ENCODE measurements at regions of chr15 and their contacts with region 1.

Region 1: GRCh38 chr15:89760303-89761008 is 9.4 kb upstream of the MESP1 start:
- DNase-seq: peak; percentile 95
- H3K4me3 Mint-ChIP-seq: peak overlapping the region; percentile 49
- H3K27ac Mint-ChIP-seq: peak overlapping the region; percentile 60
- H3K4me1 Mint-ChIP-seq: peaks cover 38% of the 10 kb centered on the region
- H3K27me3 Mint-ChIP-seq: no peaks in the 10 kb centered on the region
- CTCF ChIP-seq: peak; percentile 95

Region 2: GRCh38 chr15:89845305-89845893 is 84.9 kb after region 1 on chr15:
- CTCF ChIA-PET with region 1: interaction called, 11 read pairs
- intact Hi-C with region 1: loop called (anchors 2 kb)
- DNase-seq: peak; percentile 37
- H3K4me3 Mint-ChIP-seq: peak overlapping the region; percentile 8
- H3K27ac Mint-ChIP-seq: peak overlapping the region; percentile 77
- H3K4me1 Mint-ChIP-seq: peaks cover 46% of the 10 kb centered on the region
- H3K27me3 Mint-ChIP-seq: no peaks in the 10 kb centered on the region
- CTCF ChIP-seq: no peak

Region 3: DNA sequence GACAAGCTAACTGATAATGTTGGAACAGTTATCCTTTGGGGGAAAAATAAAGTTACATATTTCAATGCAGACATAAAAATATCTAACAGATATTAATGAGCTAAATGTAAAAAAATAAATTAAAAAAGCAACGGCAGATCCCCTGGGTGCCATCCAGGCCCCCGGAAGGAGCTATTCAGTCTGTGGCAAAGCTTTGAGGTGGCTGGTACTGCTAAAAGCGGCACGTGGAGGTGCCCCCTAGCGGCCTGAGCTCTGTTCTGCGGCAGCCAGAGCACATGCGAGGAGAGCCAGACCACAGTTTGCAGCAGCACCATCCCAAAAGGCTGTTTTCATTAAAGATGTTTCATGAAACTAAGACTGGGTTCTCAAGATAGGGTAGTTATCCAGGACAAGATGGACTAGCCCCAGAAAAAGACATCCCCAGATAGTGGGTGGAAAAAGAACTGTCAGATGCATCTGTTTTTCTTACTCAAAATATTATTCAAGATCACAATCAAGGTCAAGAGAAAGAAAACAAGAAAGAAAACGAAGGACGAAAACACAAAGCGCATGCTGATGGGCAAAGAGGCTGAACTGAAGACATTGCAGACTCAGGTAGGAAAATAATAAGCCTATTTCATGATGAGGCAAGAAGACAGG is 114.6 kb after region 1 on chr15:
- CTCF ChIA-PET with region 1: interaction called, 166 read pairs
- intact Hi-C with region 1: loop called (anchors 1 kb)
- DNase-seq: peak; percentile 88
- H3K4me3 Mint-ChIP-seq: no peak overlapping the region
- H3K27ac Mint-ChIP-seq: no peak overlapping the region
- H3K4me1 Mint-ChIP-seq: no peaks in the 10 kb centered on the region
- H3K27me3 Mint-ChIP-seq: no peaks in the 10 kb centered on the region
- CTCF ChIP-seq: peak; percentile 88

Region 4: DNA sequence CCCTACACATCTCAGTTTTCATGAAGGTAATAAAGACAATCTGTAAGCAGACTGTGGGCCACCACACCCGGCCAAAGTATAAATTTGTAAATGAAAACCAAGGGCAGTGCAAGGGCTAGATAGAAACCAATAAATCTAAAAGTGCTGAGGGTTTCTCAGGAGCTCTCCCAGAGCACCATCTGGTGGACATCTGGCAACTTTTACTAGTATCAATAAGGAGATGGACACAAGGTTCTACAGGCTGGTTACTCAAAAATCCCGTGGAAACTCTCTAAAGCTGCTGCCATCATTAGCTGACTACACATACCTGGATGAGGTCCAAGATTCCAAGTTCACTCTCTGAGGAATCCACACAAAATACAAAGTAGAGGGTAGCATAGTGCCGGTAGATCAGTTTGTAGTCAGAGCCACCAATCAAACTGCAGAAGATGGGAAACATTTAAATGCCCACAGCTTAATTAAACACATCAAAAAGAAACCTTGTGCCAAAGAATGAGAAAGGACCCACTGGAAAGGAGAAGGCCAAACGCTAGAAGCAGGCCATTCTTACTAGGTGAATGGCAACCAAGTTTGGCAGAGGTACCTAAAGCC is 127.9 kb after region 1 on chr15:
- CTCF ChIA-PET with region 1: interaction called, 26 read pairs
- intact Hi-C with region 1: no loop called
- DNase-seq: peak; percentile 49
- H3K4me3 Mint-ChIP-seq: no peak overlapping the region
- H3K27ac Mint-ChIP-seq: no peak overlapping the region
- H3K4me1 Mint-ChIP-seq: peaks cover 15% of the 10 kb centered on the region
- H3K27me3 Mint-ChIP-seq: no peaks in the 10 kb centered on the region
- CTCF ChIP-seq: no peak

Measured in Calu3 (cell line).